ENCODE measurements at regions of chr1 and their contacts with region 1.

Region 1: DNA sequence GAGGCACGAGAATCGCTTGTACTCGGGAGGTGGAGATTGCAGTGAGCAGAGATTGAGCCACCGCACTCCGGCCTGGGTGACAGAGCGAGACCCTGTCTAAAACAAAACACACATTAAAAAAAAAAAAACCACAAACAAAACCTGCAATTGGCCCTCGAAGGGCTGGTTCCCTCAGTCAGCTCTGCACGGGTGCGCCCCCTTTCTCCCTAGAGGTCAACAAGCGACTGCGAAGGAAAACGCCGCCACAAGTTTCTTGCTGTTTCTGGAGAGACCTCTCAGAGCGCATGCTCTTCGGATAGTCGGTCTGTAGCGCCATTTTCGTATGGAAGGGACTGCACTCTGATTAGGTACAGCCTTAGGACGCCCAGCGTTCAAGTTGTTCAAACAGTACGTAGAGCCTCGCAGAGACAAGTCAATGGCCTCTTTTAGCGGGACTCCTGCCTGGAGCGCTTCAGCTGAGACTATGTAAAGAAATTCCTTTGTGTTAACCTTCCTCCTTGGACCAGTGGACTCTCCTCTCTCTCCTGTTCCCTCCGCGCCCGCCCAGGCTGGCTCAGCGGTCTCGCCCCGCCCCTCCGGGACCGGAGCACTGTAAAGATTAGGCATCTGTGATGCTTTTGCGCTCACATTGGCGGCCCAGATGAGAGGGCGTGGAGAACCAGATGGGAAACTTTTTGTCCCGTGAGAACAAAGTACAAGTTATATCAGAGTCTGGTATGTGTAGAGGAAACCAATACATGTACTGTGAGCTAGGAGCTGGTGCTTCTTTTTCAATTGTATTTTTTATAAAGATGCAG is 1.0 kb upstream of the CDC14A start:
- DNase-seq: peak; percentile 69 to 71
- ATAC-seq: peak; percentile 75 to 76
- H3K4me3 ChIP-seq: peak overlapping the region; percentile 94 to 98 (median 96)
- H3K27ac ChIP-seq: peak overlapping the region; percentile 84 to 91 (median 88)
- H3K4me1 ChIP-seq: peaks cover 17 to 20% of the 10 kb centered on the region in 2 donors
- H3K27me3 ChIP-seq: no peaks in the 10 kb centered on the region
- CTCF ChIP-seq: peak in 1 of 5 experiments; percentile 28
- POLR2A ChIP-seq: peak; percentile 19 to 42

Region 2: DNA sequence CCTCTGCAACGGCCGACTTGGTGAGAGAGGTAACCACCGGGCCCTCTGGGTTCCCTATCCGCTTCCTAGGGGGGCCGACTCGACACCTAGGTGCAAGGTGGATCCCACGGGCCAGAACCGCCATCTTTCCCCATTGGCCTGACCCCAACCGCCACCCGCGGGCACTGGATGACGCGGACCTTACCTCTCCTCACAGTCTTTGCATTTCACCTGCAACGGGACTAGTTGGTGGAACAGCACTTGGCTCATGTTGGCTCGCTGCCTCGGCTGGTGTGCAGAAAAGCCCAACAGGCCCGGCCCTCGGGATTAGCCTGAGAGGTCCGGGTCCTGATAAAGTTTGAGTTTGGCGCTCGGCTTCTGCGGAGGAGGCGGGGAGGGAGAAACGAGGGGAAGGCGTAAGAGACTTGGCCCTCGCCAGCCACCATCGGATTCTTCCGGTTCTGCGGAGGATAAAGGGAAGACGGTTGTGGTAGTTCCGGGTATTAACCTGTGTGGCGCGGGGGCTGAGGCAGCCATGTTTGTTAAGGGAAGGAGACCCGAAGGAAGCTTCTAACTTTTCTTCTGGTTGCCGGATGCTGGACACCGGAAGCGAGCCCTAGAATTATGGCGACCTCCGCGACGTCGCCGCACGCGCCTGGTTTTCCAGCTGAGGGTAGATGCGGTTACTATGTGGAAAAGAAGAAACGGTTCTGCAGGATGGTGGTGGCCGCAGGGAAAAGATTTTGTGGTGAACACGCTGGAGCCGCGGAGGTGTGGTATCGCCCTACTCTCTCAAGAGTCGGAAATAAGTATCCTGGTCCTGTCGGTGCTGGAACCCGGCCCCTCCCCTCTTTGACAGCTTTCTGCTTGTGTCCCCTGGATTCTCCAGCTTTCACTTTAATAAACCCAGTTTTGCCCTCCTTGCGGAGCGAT is 218.5 kb before region 1 on chr1 and contains the starts of genes SASS6 and TRMT13:
- in situ Hi-C with region 1: no loop called
- intact Hi-C with region 1: loop called (anchors 1 kb)
- DNase-seq: peak; percentile 96
- ATAC-seq: peak; percentile 99
- H3K4me3 ChIP-seq: peak within 1 kb of the TSS; percentile 80 to 90 (median 85)
- H3K27ac ChIP-seq: peak within 1 kb of the TSS; percentile 75 to 85 (median 82)
- H3K4me1 ChIP-seq: peaks cover 20 to 28% of the 10 kb centered on the region in 2 donors
- H3K27me3 ChIP-seq: no peaks in the 10 kb centered on the region
- CTCF ChIP-seq: peak in 3 of 5 experiments; percentile 9 to 28 (median 23)
- POLR2A ChIP-seq: peak; percentile 7 to 20
- total RNA-seq, gene SASS6: 0.71 to 4.2 (median 1.6) TPM
- total RNA-seq, gene TRMT13: 5.5 to 22.6 (median 10.6) TPM

Region 3: GRCh38 chr1:100249537-100250257 is 101.6 kb before region 1 on chr1 and contains the start of gene DBT:
- in situ Hi-C with region 1: no loop called
- intact Hi-C with region 1: loop called (anchors 5 kb)
- DNase-seq: peak; percentile 96 to 97
- ATAC-seq: peak; percentile 100
- H3K4me3 ChIP-seq: peak within 1 kb of the TSS; percentile 79 to 96 (median 88)
- H3K27ac ChIP-seq: peak within 1 kb of the TSS; percentile 88 to 95 (median 90)
- H3K4me1 ChIP-seq: peaks cover 8 to 11% of the 10 kb centered on the region in 2 donors
- H3K27me3 ChIP-seq: no peaks in the 10 kb centered on the region
- CTCF ChIP-seq: no peak
- POLR2A ChIP-seq: peak; percentile 74 to 84
- total RNA-seq, gene DBT: 7.6 to 11.3 (median 9.6) TPM

Region 4: DNA sequence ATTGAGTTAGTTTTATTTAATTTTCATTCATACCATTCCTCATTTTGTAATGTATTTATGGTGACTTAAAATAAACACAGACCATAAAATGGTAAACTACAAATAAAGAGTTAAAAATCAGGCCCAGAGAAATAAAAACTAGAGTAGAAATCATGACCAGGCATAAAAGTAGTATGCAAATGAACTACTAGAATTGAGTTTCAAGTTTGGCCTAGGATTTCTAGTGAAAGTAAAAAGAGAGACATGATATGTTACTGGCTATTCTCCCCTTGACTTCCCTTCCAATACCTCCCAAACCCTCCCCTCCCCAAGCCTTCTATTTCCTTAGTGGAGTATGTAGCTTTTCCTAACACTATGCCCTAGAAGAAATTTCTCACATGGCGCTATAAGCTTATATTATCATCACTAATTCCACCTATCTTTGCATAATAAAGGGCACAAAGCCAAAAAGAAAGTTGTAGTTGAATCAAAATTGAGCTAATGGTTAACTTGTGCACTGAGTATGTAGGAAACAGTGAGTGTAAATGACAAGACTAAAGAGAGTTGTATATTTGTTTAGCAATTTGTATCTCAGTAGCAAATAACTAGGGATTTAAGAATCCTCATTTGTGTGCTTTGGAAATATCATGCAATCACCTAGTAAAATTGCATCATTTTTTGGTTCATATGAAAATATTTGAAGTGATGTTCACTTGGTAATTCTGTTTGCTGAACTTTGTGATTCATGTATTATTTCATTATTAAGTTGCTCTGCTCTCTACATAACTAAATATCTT is 28.7 kb before region 1 on chr1:
- in situ Hi-C with region 1: no loop called
- intact Hi-C with region 1: loop called (anchors 2 kb)
- DNase-seq: no peak
- ATAC-seq: peak; percentile 24 to 32
- H3K4me3 ChIP-seq: no peak overlapping the region
- H3K27ac ChIP-seq: peak overlapping the region; percentile 20 to 52 (median 33)
- H3K4me1 ChIP-seq: peaks cover 14 to 20% of the 10 kb centered on the region in 2 donors
- H3K27me3 ChIP-seq: no peaks in the 10 kb centered on the region
- CTCF ChIP-seq: no peak
- POLR2A ChIP-seq: no peak

Region 5: GRCh38 chr1:100622037-100622436 is 270.7 kb after region 1 on chr1:
- in situ Hi-C with region 1: no loop called
- intact Hi-C with region 1: no loop called
- DNase-seq: peak in 1 of 2 donors; percentile 15
- ATAC-seq: peak; percentile 49 to 66
- H3K4me3 ChIP-seq: no peak overlapping the region
- H3K27ac ChIP-seq: no peak overlapping the region
- H3K4me1 ChIP-seq: no peaks in the 10 kb centered on the region
- H3K27me3 ChIP-seq: no peaks in the 10 kb centered on the region
- CTCF ChIP-seq: no peak
- POLR2A ChIP-seq: no peak

Region 6: DNA sequence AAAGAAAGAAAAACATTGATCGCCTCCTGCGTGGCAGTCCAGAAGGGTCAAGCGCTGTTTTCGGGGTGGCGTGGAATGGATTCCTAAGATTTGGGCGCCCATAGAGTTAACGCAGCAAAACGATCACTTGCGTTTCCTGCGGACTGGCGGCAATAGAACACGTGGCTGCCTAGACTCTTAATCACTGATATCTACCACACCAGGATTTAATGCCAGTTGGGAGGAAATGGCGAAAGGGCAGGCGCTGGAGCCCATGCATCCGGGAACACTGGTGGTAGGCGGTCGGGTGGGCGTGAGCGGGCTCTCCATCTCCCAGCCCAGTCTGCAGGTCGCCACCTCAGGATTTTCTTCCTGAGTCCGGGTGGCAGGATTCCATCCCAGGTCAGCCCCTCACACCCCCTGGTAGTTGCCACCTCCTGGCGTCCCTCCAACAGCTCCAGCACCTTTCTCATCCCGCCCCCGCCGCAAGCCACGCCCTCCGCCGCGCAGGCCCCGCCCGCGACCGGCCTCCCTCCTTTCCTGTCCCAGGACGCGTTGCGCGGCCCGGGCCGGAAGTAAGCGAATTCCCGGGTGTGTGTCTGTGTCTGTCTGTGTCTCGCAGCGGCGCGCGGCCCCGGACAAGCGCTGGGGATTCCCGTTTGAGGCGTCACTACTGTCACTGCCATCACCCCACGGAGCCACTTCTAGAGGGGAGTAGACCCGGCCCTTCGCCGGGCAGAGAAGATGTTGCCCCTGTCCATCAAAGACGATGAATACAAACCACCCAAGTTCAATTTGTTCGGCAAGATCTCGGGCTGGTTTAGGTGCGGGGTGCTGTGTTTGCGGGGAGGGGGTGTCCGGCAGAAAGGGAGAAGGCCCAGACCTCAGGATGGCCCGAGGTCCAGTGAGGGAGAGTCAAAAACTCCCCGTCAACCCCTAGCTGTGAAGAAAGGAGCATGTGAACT is 544.5 kb after region 1 on chr1 and contains the start of gene SLC30A7:
- in situ Hi-C with region 1: loop called in 1 of 4 experiments (anchors 25 kb)
- intact Hi-C with region 1: loop called (anchors 5 kb)
- DNase-seq: peak; percentile 87 to 92
- ATAC-seq: peak; percentile 80 to 86
- H3K4me3 ChIP-seq: peak within 1 kb of the TSS; percentile 66 to 99 (median 86)
- H3K27ac ChIP-seq: peak within 1 kb of the TSS; percentile 94 to 99 (median 94)
- H3K4me1 ChIP-seq: peaks cover 21 to 29% of the 10 kb centered on the region in 2 donors
- H3K27me3 ChIP-seq: no peaks in the 10 kb centered on the region
- CTCF ChIP-seq: no peak
- POLR2A ChIP-seq: peak; percentile 60 to 79
- total RNA-seq, gene SLC30A7: 1.5 to 6.2 (median 3.5) TPM